HEK293 (cell line): ENCODE measurements at regions of chr19 and their contacts with region 1.

Region 1: DNA sequence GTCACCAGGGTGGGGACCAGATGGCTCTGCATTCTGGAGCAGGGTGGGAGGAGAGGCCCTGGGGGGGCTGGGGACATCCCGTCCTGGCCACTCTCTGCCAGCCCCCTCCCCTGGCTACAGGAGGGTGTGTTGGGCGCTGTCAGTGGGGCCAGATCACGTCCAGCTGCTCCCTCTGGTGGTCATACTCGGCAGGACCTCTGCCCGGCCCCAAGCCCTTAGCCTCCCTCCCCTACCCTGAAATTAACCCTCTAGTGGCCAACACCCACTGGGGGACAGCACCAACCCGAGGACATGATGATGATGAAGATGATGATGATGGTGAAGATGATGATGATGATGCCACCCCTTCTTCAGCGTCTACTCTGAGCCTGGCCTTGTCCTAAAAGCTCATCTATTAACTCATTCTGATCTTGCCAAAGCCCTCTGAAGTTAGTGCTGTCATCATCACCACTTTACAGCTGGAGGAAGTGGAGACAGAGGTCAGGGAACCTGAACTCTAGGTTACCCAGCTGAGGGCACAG is 590 bp upstream of the LGI4 start:
- H3K4me3 ChIP-seq: no peak overlapping the region
- H3K27ac ChIP-seq: no peak overlapping the region; the same call in 1 of the 2 replicates
- H3K4me1 ChIP-seq: peaks cover 3% of the 10 kb centered on the region
- CTCF ChIP-seq: peak; percentile 98

Region 2: DNA sequence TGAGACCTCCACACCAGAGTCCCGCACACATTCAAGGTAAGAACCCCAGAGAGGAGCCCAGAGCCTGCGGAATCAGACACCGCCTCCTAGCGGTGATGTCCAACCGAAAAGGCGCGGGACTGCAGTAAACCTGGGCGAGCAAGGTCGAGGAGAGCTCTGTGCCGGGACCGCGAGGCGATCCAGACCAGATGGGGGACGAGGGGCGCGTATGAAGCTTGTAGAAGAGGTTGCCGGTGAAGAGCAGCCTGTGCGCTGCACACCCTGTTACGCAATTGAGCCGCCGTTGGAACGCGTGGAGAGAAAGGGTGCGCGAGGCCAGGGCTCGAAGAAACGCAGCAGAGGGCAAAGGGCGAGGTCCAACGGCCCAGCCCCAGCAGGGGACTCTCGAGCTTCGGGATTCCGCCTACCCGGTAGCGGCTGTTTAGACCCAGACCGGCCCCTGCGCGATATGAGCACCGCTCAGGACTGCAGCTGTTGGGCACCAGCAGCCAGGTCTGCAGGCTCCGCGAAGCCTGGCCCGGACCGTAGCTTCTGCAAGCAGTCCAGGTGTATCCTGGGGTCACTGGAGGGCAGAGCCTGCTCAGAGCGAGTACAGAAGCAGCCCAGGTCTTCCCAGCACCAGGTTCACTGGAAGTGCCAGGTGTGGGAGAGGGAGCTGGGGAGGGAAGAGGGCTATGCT is 296.6 kb before region 1 on chr19:
- CTCF ChIA-PET with region 1: interaction called, 10 read pairs
- POLR2A ChIA-PET with region 1: no interaction called
- H3K4me3 ChIP-seq: no peak overlapping the region
- H3K27ac ChIP-seq: no peak overlapping the region
- H3K4me1 ChIP-seq: 0 out of 2 replicates have a peak, but pooled peaks cover 2% of the 10 kb centered on the region
- CTCF ChIP-seq: no peak

Region 3: GRCh38 chr19:34888091-34888490 is 247.4 kb before region 1 on chr19:
- CTCF ChIA-PET with region 1: no interaction called
- POLR2A ChIA-PET with region 1: no interaction called
- H3K4me3 ChIP-seq: no peak overlapping the region
- H3K27ac ChIP-seq: no peak overlapping the region
- H3K4me1 ChIP-seq: no peaks in the 10 kb centered on the region
- CTCF ChIP-seq: no peak

Region 4: GRCh38 chr19:35055715-35056179 is 79.7 kb before region 1 on chr19:
- CTCF ChIA-PET with region 1: interaction called, 15 read pairs
- POLR2A ChIA-PET with region 1: interaction called, 3 read pairs
- H3K4me3 ChIP-seq: no peak overlapping the region
- H3K27ac ChIP-seq: no peak overlapping the region
- H3K4me1 ChIP-seq: peaks cover 7% of the 10 kb centered on the region; the same call in 1 of the 2 replicates
- CTCF ChIP-seq: peak; percentile 89

Region 5: DNA sequence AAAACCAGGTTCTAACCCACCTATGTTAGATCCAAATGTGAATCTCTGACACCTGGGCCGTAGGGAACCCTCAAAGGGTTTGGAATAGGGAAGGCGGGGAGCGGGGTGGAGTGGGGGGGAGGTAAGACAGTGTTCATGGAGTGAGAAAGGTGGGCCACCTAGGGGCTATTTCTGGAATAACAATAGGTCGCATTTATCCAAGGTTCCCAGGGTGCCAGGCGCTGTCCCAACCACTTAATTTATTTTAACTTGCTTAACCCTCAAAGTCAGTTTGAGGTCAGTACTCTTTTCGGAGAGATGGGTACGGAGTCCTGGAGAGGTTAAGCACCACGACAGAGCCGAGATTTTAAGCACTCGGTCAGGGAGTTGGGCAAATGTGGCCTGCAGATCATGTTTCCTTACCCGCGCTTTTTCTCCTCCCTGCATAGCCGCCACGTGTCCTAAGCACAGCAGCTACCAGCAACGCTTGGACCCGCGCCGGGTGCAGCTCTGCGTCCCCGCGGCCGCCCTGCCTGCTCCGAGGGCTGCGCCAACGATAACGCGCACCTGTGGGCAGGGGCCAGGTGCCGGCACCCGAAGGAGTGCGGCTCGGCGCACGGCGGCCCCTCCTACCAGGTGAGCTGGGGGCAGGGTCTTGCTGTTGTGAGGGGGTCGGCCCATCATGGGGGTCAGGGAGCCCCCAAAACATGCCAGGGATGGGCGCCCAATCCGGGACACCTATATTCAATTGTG is 44.8 kb before region 1 on chr19:
- CTCF ChIA-PET with region 1: interaction called, 37 read pairs
- POLR2A ChIA-PET with region 1: no interaction called
- H3K4me3 ChIP-seq: no peak overlapping the region
- H3K27ac ChIP-seq: no peak overlapping the region; the same call in 1 of the 2 replicates
- H3K4me1 ChIP-seq: peaks cover 7% of the 10 kb centered on the region
- CTCF ChIP-seq: peak; percentile 86

Region 6: GRCh38 chr19:35114353-35115176 is 20.9 kb before region 1 on chr19:
- CTCF ChIA-PET with region 1: interaction called, 101 read pairs
- POLR2A ChIA-PET with region 1: interaction called, 3 read pairs
- H3K4me3 ChIP-seq: peak overlapping the region; percentile 7
- H3K27ac ChIP-seq: no peak overlapping the region
- H3K4me1 ChIP-seq: peaks cover 2% of the 10 kb centered on the region; the same call in 1 of the 2 replicates
- CTCF ChIP-seq: peak; percentile 98

Region 7: DNA sequence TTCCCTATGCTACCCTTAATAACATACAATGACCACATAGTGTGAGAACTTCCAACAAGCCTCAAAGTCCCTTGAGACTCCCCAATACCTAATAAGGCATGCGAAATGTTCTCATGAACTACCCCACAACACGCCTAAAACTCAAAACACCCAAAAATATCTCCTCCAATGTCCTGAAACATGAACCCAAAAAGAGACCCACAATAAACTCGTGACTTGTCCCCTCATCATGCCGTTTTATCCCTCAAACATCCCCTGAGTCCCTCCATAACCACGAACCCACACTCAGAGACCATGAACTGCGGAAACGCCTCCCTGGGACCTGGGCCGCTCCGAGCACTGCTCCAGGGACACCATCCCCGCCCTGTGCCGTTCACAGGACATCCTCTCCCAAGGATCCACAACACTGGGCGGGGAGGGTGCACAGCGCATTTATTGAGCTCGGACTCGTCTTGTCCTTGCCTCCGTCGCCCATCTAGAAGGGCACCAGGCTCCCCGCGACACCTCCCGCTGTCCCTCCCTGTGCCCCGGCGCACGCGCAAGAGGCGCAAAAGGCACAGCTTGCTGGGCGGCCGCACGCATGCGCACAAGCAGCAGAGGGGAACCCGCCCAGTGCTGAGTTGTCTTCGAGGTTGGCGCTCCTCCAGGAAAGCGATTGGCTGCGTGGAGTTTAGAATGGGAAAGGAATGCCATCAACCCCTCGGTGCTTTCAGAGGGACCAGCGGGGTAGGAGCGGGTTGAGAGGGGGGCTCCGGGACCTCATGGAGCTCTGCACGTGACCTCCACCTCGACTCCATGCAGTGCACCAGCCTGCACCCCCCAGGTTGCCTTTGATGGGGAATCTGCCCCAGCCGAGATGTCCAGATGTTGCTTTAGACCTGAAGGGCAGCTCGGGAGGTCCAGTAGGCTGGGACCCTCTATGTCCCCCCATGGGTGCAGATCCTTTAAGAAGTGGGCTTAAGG is 11.1 kb before region 1 on chr19:
- CTCF ChIA-PET with region 1: interaction called, 101 read pairs
- POLR2A ChIA-PET with region 1: interaction called, 4 read pairs
- H3K4me3 ChIP-seq: peak overlapping the region; percentile 40
- H3K27ac ChIP-seq: peak overlapping the region; percentile 7; the same call in 1 of the 2 replicates
- H3K4me1 ChIP-seq: peaks cover 10% of the 10 kb centered on the region
- CTCF ChIP-seq: no peak

Region 8: GRCh38 chr19:35154525-35155406 is 19.3 kb after region 1 on chr19 and contains the start of gene FXYD5:
- CTCF ChIA-PET with region 1: interaction called, 20 read pairs
- POLR2A ChIA-PET with region 1: interaction called, 4 read pairs
- H3K4me3 ChIP-seq: peak within 1 kb of the TSS; percentile 57
- H3K27ac ChIP-seq: peak within 1 kb of the TSS; percentile 75; the same call in 1 of the 2 replicates
- H3K4me1 ChIP-seq: peaks cover 20% of the 10 kb centered on the region
- CTCF ChIP-seq: peak; percentile 87

Region 9: GRCh38 chr19:35404879-35405622 is 269.6 kb after region 1 on chr19:
- CTCF ChIA-PET with region 1: no interaction called
- POLR2A ChIA-PET with region 1: no interaction called
- H3K4me3 ChIP-seq: no peak overlapping the region
- H3K27ac ChIP-seq: no peak overlapping the region
- H3K4me1 ChIP-seq: 0 out of 2 replicates have a peak, but pooled peaks cover 3% of the 10 kb centered on the region
- CTCF ChIP-seq: no peak